ENCODE measurements at regions of chr14 and their contacts with region 1.

Region 1: DNA sequence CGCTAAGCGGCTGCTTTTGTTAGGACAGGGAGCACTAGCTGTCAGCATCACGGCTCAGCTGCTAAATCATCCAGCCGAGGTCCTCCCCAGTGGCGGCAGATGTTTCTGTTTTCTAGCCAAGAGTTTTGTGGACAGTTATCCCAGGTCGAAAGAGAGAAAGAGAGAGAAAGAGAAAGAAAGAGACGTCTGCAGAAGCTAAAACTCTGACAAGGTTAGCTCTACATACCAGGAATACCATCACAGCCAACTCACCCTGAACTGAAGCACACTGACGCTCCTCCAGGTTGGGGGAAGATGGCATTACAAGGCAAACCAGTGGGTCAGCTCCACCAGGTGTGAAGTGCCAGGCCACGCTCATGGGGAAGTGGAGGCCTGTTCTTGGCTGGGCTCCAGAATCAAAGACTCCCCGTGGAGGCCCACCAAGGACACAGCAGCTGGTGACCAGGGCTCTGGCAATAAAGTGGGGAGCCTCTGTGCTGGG is 64.9 kb upstream of the DICER1 start:
- DNase-seq: no peak
- H3K4me3 ChIP-seq: no peak overlapping the region
- H3K27ac ChIP-seq: peak overlapping the region; percentile 41 to 47
- H3K4me1 ChIP-seq: no peaks in the 10 kb centered on the region
- H3K27me3 ChIP-seq: no peaks in the 10 kb centered on the region
- CTCF ChIP-seq: no peak
- POLR2A ChIP-seq: no peak

Region 2: DNA sequence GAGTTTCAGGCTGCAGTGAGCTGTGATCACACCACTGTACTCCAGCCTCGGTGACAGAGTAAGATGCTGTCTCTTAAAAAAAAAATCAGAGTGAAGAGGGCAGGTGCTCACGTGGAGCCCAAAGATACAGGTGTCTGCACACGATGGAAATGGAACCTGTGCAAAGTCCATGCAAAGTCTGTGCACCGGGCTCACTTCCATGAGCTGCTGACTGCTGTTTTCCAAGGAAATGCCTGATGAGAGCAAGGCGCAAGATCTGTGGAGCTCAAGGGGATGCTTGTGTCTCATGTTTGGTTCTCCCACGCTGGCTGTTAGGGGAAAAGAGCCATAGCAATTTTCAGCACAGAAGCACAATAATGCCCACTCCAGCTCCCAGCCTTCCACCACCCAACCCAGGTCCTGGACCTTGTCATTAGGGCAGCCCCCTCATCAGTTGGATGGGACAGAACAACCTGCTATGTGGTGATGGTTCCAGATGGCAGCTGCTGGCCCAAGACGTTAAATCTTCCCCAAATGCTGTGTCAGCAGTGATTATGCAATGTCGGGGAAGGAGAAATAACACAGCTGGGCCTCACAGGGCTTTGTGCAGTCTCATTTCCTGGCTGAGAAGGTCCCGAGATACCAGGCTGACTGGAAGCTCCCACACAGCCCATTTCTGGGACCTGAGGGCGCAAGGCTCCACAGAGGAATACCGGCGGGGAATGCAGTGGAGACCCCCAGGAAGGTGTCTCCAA is 37.0 kb before region 1 on chr14:
- intact Hi-C with region 1: loop called (anchors 5 kb)
- DNase-seq: no peak
- H3K4me3 ChIP-seq: no peak overlapping the region
- H3K27ac ChIP-seq: peak overlapping the region; percentile 1 to 42
- H3K4me1 ChIP-seq: no peaks in the 10 kb centered on the region
- H3K27me3 ChIP-seq: no peaks in the 10 kb centered on the region
- CTCF ChIP-seq: no peak
- POLR2A ChIP-seq: no peak

Measured in prostate gland (tissue), 2 donors.